IMR-90 (cell line): ENCODE measurements at regions of chr3 and their contacts with region 1.

Region 1: DNA sequence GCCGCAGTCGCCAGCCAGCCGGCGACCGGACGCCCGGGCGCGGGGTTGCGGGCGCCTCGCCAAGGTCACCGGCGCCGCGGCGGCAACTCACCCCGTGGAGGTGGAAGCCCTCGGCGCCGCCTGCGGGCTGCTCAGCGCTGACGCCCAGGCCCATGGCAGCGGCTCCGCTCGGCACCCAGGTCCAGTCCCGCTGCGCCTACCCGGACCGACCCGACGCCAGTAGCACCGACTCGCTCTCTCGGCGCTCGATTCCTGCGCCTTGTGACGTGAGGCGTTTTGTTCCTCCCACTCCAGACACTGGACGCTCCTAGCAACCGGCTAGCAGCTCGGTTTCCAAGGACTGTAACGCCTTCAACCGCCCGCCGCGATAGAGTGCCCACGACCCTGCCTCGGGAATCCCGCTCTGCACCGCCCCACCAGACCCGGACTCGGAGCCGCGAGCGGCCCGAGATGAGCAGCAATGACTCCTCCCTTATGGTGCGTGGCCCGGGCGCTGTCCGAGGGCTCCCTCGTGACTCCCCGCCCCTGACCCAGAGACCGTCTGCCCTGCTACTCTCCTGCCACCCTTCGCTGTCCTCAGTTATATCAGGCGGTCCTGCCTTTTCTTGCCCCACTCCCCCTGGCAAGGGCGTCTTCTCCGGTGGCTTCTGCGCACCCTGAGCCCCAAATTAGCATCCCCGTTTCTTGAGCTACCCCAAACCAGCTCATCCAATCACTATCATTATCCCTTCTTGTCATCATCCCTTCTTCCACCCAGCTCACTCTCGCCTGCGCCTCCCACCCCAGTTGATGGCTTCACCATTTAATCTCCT is at the starts of genes GORASP1 and TTC21A:
- DNase-seq: peak; percentile 85
- ATAC-seq: peak; percentile 90
- H3K4me3 ChIP-seq: peak within 1 kb of the TSS; percentile 67
- H3K27ac ChIP-seq: peak within 1 kb of the TSS; percentile 81
- H3K4me1 ChIP-seq: peaks cover 4% of the 10 kb centered on the region; the same call in 1 of the 2 replicates
- H3K27me3 ChIP-seq: no peaks in the 10 kb centered on the region
- CTCF ChIP-seq: no peak
- POLR2A ChIP-seq: peak; percentile 87
- RAD21 ChIP-seq: no peak
- total RNA-seq, gene GORASP1: 25.8 and 35.0 TPM in 2 replicates
- total RNA-seq, gene TTC21A: 0.56 and 0.90 TPM in 2 replicates

Region 2: DNA sequence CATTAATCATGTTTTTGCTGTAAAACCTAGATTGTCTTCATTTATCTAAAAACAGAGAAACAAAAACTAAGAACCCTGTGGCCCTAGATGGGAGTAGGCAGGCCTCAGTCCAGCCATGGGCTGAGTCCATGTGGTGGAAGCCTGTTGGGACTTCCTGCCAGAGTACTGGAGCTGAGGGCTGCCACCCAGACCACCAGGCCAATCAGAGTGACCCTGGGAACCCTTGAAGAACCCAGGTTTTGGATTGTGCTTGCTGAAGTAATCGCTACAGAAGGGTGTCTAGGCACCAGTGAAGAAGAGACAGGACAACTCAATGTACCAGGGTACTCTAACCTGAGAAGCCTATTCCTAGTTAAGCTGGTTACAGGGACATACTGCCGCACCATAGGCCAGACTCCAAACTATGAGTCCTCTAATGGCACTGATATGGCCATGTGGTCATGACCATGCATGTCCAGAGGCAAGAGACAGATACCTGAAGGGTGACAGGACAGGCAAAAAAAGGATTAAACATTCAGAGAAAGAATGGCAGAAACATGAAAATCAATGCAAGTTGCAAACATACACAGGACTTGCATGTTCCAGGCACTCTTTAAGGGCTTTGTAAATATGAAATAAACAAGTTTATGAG is 32.9 kb after region 1 on chr3:
- CTCF ChIA-PET with region 1: no interaction called
- POLR2A ChIA-PET with region 1: no interaction called
- dilution Hi-C with region 1: no loop called
- in situ Hi-C with region 1: no loop called
- intact Hi-C with region 1: no loop called
- DNase-seq: no peak
- ATAC-seq: no peak; the same call in 1 of the 2 replicates
- H3K4me3 ChIP-seq: no peak overlapping the region
- H3K27ac ChIP-seq: no peak overlapping the region
- H3K4me1 ChIP-seq: peaks cover 23% of the 10 kb centered on the region
- H3K27me3 ChIP-seq: no peaks in the 10 kb centered on the region
- CTCF ChIP-seq: no peak
- POLR2A ChIP-seq: no peak
- RAD21 ChIP-seq: no peak

Region 3: DNA sequence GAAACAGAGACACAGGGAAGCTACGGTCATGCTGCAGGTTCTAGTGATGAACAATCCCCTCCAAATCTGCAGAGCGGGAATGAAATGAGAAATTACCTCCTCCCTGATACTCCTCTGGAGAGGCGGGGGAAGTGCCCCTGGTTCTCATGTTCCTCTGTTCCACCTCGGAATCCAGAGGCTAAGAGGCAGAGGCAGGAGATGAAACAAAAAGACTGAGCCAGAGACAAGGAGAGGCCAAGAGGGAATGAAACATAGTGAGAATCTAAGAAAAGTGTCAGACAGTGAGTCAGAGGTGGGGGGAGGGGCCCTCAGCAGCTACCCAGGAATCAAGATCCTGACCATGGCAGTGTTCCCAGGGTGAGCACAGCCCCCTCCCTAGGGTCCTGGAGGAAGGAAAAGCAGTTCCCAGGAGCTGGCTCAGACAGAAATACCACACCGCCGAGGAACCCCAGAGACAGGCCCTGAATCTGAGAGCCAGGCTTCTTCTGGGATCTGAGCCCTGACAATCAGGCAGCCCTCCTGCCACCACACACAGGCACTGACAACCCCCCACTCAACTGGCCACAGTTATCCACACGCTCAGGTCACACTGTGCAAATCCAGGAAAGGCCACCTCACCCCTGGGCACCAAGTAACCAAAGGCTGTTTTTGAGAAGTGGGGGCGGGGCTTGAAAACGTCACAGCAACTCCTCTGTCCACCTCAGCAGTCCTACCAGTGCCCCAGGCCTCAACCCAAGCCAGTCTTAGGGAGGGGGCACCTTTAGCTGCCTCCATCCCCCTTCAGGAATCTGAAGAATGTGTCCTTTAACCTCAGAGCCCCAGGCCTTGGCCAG is 43.4 kb after region 1 on chr3:
- CTCF ChIA-PET with region 1: no interaction called
- POLR2A ChIA-PET with region 1: no interaction called
- dilution Hi-C with region 1: no loop called
- in situ Hi-C with region 1: no loop called
- intact Hi-C with region 1: loop called (anchors 1 kb)
- DNase-seq: peak; percentile 97
- ATAC-seq: peak; percentile 30
- H3K4me3 ChIP-seq: peak overlapping the region; percentile 96
- H3K27ac ChIP-seq: peak overlapping the region; percentile 92
- H3K4me1 ChIP-seq: peaks cover 52% of the 10 kb centered on the region
- H3K27me3 ChIP-seq: no peaks in the 10 kb centered on the region
- CTCF ChIP-seq: no peak; the same call in 1 of the 2 replicates
- POLR2A ChIP-seq: peak; percentile 92
- RAD21 ChIP-seq: no peak; the same call in 1 of the 2 replicates

Region 4: DNA sequence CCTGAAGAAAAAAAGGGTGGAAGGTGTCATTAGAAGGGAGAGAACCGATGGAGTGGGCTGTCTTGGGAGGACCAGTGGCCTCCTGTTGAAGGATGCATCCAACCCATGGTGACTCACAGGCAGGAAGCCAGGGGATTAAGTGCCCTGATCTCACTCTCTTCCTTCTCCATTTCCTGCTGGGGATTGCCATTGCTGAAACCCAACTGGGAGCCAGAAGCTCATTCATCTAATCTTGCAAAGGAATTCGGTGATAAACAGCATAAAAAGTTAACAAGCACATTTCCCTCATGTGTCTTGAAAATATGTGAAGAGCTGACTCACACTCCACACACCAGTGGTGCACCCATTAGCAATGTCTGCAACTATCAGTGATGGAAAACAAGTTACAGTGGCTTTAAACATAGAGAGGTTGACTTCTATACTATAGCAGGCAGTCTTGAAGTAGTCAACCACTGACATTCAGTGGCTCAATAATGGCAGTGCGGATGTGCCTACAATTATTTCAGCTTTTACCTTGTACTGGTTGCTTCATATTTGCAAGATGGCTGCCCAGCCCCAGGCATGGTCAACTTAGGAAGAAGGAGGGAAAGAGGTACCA is 58.6 kb after region 1 on chr3:
- CTCF ChIA-PET with region 1: no interaction called
- POLR2A ChIA-PET with region 1: no interaction called
- dilution Hi-C with region 1: no loop called
- in situ Hi-C with region 1: no loop called
- intact Hi-C with region 1: loop called (anchors 5 kb)
- DNase-seq: peak; percentile 94
- ATAC-seq: peak; percentile 92
- H3K4me3 ChIP-seq: no peak overlapping the region
- H3K27ac ChIP-seq: peak overlapping the region; percentile 43
- H3K4me1 ChIP-seq: peaks cover 5% of the 10 kb centered on the region
- H3K27me3 ChIP-seq: no peaks in the 10 kb centered on the region
- CTCF ChIP-seq: 0 out of 2 replicates have a peak, but pooled peaks have one; percentile 18
- POLR2A ChIP-seq: no peak
- RAD21 ChIP-seq: no peak

Region 5: GRCh38 chr3:39180546-39181346 is 73.2 kb after region 1 on chr3:
- CTCF ChIA-PET with region 1: interaction called, 3 read pairs
- POLR2A ChIA-PET with region 1: no interaction called
- dilution Hi-C with region 1: no loop called
- in situ Hi-C with region 1: no loop called
- intact Hi-C with region 1: loop called (anchors 2 kb)
- DNase-seq: peak; percentile 54
- ATAC-seq: peak; percentile 68
- H3K4me3 ChIP-seq: peak overlapping the region; percentile 32
- H3K27ac ChIP-seq: no peak overlapping the region; the same call in 1 of the 2 replicates
- H3K4me1 ChIP-seq: peaks cover 11% of the 10 kb centered on the region
- H3K27me3 ChIP-seq: no peaks in the 10 kb centered on the region
- CTCF ChIP-seq: 0 out of 2 replicates have a peak, but pooled peaks have one; percentile 21
- POLR2A ChIP-seq: 0 out of 2 replicates have a peak, but pooled peaks have one; percentile 23
- RAD21 ChIP-seq: peak; percentile 33; the same call in 1 of the 2 replicates

Region 6: DNA sequence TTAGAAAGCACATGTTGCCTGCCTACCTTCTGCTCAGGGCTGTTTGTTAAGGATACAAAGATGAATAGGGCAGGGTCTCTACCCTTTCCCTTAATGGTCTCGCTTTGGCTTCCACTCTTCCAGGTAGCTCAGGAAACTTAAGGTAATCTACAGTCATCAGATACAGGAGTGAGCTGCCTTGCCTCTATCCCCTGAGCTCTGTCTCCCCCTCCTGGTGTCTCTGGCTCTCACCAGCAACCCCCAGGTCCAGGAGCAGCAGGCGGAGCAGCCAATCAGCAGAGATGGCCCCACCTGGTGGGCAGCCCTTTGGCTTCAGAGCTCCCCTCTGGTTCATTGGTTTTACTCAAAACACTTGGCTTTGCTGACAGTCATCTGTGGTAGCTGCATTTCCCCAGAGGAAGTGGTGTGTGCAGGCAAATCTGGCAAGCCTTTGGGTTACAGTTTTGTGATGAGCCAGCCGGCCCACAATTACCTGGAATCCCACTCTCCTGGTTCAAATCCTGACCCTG is 180.8 kb after region 1 on chr3:
- CTCF ChIA-PET with region 1: interaction called, 10 read pairs
- POLR2A ChIA-PET with region 1: no interaction called
- dilution Hi-C with region 1: no loop called
- in situ Hi-C with region 1: no loop called
- intact Hi-C with region 1: loop called (anchors 1 kb)
- DNase-seq: peak; percentile 68
- ATAC-seq: peak; percentile 93
- H3K4me3 ChIP-seq: no peak overlapping the region
- H3K27ac ChIP-seq: no peak overlapping the region
- H3K4me1 ChIP-seq: no peaks in the 10 kb centered on the region
- H3K27me3 ChIP-seq: no peaks in the 10 kb centered on the region
- CTCF ChIP-seq: peak; percentile 95
- POLR2A ChIP-seq: peak; percentile 47; the same call in 1 of the 2 replicates
- RAD21 ChIP-seq: peak; percentile 99

Region 7: DNA sequence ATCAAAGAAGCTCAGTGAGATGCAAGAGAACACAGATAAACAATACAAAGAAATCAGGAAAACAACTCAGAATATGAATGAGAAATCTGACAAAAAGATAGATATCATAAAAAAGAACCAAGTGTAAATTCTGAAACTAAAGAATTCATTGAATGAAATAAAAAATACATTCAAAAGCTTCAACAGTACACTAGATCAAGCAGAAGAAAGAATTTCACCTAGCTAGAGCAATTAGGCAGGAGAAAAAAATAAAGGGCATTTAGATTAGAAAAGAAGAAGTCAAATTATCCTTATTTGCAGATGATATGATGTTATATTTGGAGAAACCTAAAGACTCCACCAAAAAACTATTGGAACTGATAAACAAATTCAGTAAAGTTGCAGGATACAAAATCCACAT is 191.7 kb after region 1 on chr3:
- CTCF ChIA-PET with region 1: no interaction called
- POLR2A ChIA-PET with region 1: no interaction called
- dilution Hi-C with region 1: no loop called
- in situ Hi-C with region 1: no loop called
- intact Hi-C with region 1: no loop called
- DNase-seq: no peak
- ATAC-seq: no peak
- H3K4me3 ChIP-seq: no peak overlapping the region
- H3K27ac ChIP-seq: no peak overlapping the region
- H3K4me1 ChIP-seq: no peaks in the 10 kb centered on the region
- H3K27me3 ChIP-seq: peaks cover 3% of the 10 kb centered on the region; the same call in 1 of the 2 replicates
- CTCF ChIP-seq: no peak
- POLR2A ChIP-seq: no peak
- RAD21 ChIP-seq: no peak

Region 8: DNA sequence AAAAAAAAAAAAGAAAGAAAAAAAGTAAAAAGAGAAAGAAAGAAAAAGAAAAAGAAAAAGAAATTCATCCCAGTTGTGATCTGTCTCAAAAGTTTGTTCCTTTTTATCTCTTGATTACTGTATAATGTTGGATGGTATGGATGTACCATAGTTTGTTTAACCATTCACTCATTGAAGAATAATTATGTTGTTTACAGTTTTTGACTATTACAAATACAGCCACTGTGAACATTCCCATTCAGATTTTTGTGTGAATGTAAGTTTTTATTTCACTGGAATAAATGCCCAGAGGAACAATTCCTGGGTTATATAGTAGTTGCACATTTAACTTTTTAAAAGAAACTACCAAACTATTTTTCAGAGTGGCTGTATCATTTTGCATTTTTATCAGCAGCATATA is 211.7 kb after region 1 on chr3:
- CTCF ChIA-PET with region 1: no interaction called
- POLR2A ChIA-PET with region 1: interaction called, 10 read pairs
- dilution Hi-C with region 1: no loop called
- in situ Hi-C with region 1: no loop called
- intact Hi-C with region 1: no loop called
- DNase-seq: no peak
- ATAC-seq: no peak
- H3K4me3 ChIP-seq: no peak overlapping the region
- H3K27ac ChIP-seq: no peak overlapping the region
- H3K4me1 ChIP-seq: no peaks in the 10 kb centered on the region
- H3K27me3 ChIP-seq: no peaks in the 10 kb centered on the region
- CTCF ChIP-seq: no peak
- POLR2A ChIP-seq: no peak
- RAD21 ChIP-seq: no peak

Region 9: DNA sequence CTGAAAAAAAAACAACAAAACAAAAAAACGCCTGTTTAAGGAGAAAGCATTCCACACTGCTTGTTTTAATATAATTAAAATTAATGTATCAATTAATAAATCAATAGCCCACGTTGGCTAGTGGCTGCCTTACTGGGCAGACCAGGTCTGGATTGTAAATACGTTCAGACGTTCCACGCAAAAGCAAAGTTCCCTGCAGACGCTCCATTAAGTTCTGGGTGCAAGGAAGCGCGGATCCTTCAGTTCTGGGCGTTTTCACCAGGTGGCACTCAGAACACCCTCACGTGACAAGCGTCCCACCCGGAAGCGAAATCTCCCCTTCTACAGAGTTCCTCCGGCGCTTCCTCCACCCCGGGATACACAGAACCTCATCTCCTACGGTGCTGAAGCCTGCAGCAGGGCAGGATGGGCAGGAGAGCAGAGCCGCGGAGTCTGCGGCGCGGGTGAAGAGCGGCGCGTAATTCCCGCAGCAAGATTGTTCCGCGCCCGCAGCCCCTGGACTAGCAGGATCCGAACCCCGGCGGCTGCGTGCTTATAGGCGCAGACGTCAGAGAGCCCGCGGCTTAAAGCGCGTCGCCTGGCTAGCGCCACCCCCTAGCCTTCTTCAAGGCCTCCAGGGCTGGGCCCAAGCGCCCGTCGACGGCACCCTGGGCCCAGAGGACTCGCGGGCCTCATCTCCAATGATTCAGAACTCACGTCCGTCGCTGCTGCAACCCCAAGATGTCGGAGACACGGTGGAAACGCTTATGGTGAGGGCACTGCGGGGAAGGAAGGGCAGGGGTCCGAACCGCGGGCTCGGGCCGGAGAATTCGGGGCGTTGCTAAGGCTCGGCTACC is 275.7 kb after region 1 on chr3 and contains the start of gene SLC25A38:
- CTCF ChIA-PET with region 1: no interaction called
- POLR2A ChIA-PET with region 1: no interaction called
- dilution Hi-C with region 1: no loop called
- in situ Hi-C with region 1: no loop called
- intact Hi-C with region 1: loop called (anchors 5 kb)
- DNase-seq: peak; percentile 85
- ATAC-seq: peak; percentile 85
- H3K4me3 ChIP-seq: peak within 1 kb of the TSS; percentile 97
- H3K27ac ChIP-seq: peak within 1 kb of the TSS; percentile 83
- H3K4me1 ChIP-seq: peaks cover 5% of the 10 kb centered on the region; the same call in 1 of the 2 replicates
- H3K27me3 ChIP-seq: no peaks in the 10 kb centered on the region
- CTCF ChIP-seq: peak; percentile 30; the same call in 1 of the 2 replicates
- POLR2A ChIP-seq: peak; percentile 66
- RAD21 ChIP-seq: no peak
- total RNA-seq, gene SLC25A38: 16.1 and 17.4 TPM in 2 replicates